Heart left ventricle (tissue), 16 donors: ENCODE measurements at regions of chr20 and their contacts with region 1.

Region 1: GRCh38 chr20:15528391-15529111 is 1044.7 kb downstream of the KIF16B start:
- DNase-seq: no peak
- ATAC-seq: no peak
- H3K4me3 ChIP-seq: no peak overlapping the region
- H3K27ac ChIP-seq: no peak overlapping the region
- H3K4me1 ChIP-seq: no peaks in the 10 kb centered on the region
- H3K27me3 ChIP-seq: no peaks in the 10 kb centered on the region
- CTCF ChIP-seq: no peak
- POLR2A ChIP-seq: no peak

Region 2: DNA sequence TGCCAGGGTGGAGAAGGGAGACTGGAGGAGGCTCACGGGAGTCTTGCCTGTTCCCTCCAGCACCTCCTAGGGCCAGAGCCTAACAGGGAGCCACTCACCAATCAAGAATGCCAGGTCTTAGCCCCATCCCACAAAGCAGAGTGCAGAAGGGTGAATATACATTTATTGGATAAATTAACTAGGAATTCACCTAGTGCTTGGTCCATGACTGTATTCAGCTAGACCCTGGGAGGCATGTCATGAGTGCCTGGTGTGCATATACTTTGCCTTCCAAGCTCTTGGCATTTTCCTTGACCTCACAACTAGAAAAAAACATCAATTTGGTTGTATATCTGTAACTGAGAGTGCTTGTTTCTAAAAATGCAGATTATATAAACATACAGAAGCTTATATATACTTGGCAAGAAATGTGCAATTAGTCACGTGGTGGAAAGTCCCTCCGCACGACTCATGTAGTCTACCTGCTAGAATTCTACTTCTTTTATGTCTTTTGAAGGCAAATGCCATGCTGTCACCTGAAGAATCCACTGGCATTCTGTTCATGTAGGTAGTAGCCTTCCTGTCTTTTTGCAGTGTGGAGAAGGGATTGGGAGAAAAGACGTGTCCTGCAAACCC is 53.7 kb after region 1 on chr20:
- intact Hi-C with region 1: loop called in 1 of 10 experiments (anchors 10 kb)
- DNase-seq: no peak
- ATAC-seq: no peak
- H3K4me3 ChIP-seq: no peak overlapping the region
- H3K27ac ChIP-seq: no peak overlapping the region
- H3K4me1 ChIP-seq: no peaks in the 10 kb centered on the region
- H3K27me3 ChIP-seq: no peaks in the 10 kb centered on the region
- CTCF ChIP-seq: no peak
- POLR2A ChIP-seq: no peak

Region 3: GRCh38 chr20:15613530-15613929 is 85.0 kb after region 1 on chr20:
- intact Hi-C with region 1: no loop called
- DNase-seq: peak in 3 of 5 donors; percentile 25 to 51 (median 28)
- ATAC-seq: peak; percentile 71 to 94 (median 86)
- H3K4me3 ChIP-seq: no peak overlapping the region
- H3K27ac ChIP-seq: peak overlapping the region in 2 of 12 donors; percentile 16 to 70
- H3K4me1 ChIP-seq: peaks cover 0 to 14% (median 5%) of the 10 kb centered on the region in 12 donors
- H3K27me3 ChIP-seq: no peaks in the 10 kb centered on the region
- CTCF ChIP-seq: no peak
- POLR2A ChIP-seq: no peak